ENCODE measurements at regions of chr11 and their contacts with region 1.

Region 1: DNA sequence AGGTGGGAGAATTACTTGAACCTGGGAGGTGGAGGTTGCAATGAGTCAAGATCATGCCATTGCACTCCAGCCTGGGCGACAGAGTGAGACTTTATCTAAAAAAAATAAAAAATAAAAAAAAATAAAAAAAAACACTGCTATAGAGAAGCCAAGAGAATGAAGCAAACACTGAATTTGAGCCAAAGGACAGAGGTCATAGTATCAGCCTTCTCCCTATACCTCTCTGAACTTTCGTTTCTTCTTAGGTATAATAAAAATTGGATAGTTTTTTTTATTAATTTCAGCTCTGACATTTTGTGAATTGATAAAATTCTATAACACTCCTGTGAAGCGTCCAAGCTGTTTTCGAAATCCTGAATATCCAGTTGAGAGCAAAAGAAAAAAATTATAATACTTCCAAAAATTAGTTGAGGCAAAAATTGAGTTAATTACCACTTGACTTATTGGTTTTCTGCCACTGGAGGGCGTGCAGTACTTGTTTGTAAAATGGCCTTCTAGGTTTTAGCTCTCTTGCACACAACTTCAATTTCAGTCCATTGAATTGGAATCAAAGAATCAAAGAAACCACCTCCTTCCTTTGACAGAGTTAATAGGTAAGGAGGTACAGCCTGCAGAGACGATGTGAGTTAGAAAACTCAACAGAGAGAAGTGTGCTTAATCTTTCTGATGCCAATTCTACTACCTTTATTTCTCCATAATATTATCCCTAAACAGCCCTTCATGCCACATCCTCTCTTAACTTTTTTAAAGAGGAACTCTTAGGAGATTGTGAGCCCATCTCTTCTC is 143.2 kb downstream of the BBOX1 start:
- DNase-seq: peak in 38 of 42 donors; percentile 11 to 87 (median 62)

Region 2: DNA sequence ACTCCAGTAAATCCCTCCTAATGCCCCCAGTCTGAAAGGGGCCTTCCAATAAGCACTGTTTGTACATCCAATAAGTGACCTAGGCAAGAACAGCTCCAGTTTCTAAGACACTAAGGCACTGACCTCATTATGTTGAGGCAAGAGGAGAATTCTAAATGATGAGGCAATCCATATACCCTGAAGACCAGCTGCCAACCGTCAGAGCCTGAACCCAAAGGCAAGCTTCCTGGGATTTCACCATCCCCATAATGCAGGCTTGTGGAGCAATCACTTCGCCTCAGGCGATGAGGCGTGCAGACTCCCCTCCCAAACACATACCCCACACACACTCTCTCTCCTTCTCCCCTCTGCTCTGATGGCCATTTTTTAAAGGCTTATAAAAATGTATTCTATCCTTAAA is 239.3 kb after region 1 on chr11:
- intact Hi-C with region 1: no loop called
- DNase-seq: peak in 1 of 42 donors; percentile 60

Region 3: GRCh38 chr11:27485930-27486773 is 302.3 kb after region 1 on chr11:
- intact Hi-C with region 1: loop called (anchors 2 kb)
- DNase-seq: peak in 16 of 42 donors; percentile 16 to 84 (median 55)